GM18951 (cell line): ENCODE measurements at regions of chrX and their contacts with region 1.

Region 1: DNA sequence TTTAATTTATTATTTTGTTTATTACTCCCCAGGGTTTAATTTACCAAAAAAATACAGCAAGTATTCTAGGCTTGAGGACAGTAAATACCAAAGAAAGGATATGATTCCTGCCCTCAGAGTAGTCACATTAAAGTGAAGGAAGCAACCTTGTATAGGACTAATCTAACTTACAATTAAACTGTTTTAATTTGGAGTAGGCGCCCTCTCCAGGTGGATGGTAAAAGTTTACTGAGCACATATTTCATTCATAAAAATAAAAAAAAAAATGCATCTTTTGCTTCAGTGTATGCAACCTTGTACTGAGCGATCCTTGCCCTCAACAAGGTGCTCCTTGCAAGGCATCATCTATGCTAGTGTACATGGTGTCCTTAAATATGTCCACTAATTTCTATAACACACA is 72.0 kb upstream of the MAGEB16 start:
- POLR2A ChIP-seq: no peak

Region 2: DNA sequence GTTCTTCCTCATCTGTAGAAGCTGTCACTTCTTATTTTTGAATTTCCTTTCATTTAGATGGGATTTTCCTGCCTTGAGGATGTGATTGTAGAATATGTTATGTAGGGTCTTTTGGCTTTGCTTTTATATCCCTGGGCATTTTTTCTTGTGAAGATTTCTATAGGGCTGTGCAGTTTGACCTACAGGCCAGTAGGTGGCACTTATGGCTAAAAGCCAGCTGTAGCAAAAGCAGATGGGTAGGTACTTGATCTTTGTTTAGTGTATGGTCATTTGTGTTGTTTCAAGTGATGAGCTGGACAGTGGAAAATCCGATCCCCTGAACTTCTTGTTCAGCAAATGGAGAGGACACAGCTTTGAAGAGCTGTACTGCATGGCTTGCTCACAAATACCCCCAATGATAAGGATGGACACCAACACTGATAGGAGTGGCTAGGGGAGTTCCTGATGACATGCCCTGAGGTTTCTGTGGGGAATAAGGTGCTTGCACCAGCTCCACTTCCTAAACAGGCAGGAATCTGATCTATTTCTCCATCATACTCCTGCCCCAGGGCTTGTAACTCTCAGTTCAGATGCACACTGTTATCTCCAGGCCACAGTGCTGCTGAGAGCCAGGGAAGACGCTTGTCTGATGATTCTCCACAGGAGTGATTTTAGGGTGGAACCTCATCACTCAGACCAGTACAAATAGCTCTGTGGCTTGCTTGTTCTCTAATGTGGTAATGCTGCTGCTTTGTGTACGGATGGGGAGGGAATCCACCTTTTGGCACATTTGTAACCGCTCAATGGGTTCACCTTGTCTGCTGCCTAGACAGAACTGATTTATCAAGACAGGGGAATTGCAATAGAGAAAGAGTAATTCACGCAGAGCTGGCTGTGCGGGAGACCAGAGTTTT is 345.1 kb before region 1 on chrX:
- in situ Hi-C with region 1: loop called (anchors 25 kb)
- POLR2A ChIP-seq: no peak

Region 3: DNA sequence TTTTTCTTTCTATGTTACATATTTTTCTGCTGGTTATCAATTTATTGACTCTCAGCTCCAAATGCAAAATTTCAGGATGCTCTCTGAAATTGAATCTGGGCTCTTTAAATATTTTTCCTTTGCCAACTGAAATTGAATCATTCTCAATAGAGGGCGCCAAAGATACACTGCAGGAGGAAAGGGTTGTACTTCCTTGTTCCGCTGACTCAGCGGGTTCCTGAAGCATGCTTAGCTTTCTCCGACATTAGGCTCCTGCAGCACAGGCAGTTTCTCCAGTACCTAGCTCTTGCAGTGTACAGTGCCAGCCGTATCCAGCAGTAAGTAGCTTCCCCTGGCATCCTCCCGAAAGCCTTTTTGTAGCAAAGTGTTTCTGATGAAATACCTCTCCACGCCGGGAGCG is 164.5 kb after region 1 on chrX:
- in situ Hi-C with region 1: no loop called
- POLR2A ChIP-seq: no peak